ENCODE measurements at regions of chr13 and their contacts with region 1.

Region 1: GRCh38 chr13:40789275-40790133 is at the start of gene SLC25A15:
- DNase-seq: peak; percentile 84

Region 2: GRCh38 chr13:41029629-41030028 is 240.1 kb after region 1 on chr13:
- in situ Hi-C with region 1: loop called (anchors 25 kb)
- DNase-seq: peak; percentile 48

Measured in KBM-7 (cell line).